ENCODE measurements at regions of chr15 and their contacts with region 1.

Region 1: GRCh38 chr15:39666677-39667076 is 85.8 kb downstream of the THBS1 start:
- DNase-seq: peak; percentile 70
- H3K4me3 ChIP-seq: no peak overlapping the region
- CTCF ChIP-seq: no peak

Region 2: GRCh38 chr15:39565851-39566250 is 100.8 kb before region 1 on chr15:
- in situ Hi-C with region 1: no loop called
- DNase-seq: no peak
- H3K4me3 ChIP-seq: no peak overlapping the region
- CTCF ChIP-seq: no peak

Region 3: DNA sequence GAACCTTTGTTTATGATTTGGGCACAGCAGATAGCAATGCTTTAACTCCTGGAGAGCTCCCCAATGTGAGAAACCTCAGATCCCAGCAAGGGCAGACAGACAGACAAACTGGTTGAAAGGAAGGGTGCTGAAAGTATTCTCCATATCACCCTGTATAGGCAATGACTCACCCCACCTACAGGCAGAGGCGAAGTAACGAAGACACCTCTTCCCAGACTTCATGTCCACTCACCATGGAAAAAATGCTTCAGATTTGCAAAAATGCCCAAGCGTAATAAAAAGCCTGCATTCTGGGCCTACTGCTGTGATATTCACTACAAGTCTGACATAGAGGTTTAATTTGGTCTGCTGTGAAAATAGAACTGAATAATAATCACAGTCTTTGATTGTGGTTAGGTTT is 35.3 kb before region 1 on chr15:
- in situ Hi-C with region 1: loop called (anchors 5 kb)
- DNase-seq: peak; percentile 60
- H3K4me3 ChIP-seq: no peak overlapping the region
- CTCF ChIP-seq: peak; percentile 21

Measured in astrocyte of the cerebellum (primary cell).